Activated CD8-positive, alpha-beta T cell treated with anti-CD3 and anti-CD28 coated beads for 36 hours (primary cell): ENCODE measurements at regions of chr1 and their contacts with region 1.

Region 1: GRCh38 chr1:8970870-8971337 is 25.2 kb downstream of the CA6 start:
- DNase-seq: peak; percentile 85
- ATAC-seq: peak; percentile 83
- H3K4me3 Mint-ChIP-seq: peak overlapping the region; percentile 93
- H3K27ac Mint-ChIP-seq: peak overlapping the region; percentile 100
- H3K4me1 Mint-ChIP-seq: peaks cover 40% of the 10 kb centered on the region
- H3K27me3 Mint-ChIP-seq: no peaks in the 10 kb centered on the region
- CTCF ChIP-seq: no peak

Region 2: DNA sequence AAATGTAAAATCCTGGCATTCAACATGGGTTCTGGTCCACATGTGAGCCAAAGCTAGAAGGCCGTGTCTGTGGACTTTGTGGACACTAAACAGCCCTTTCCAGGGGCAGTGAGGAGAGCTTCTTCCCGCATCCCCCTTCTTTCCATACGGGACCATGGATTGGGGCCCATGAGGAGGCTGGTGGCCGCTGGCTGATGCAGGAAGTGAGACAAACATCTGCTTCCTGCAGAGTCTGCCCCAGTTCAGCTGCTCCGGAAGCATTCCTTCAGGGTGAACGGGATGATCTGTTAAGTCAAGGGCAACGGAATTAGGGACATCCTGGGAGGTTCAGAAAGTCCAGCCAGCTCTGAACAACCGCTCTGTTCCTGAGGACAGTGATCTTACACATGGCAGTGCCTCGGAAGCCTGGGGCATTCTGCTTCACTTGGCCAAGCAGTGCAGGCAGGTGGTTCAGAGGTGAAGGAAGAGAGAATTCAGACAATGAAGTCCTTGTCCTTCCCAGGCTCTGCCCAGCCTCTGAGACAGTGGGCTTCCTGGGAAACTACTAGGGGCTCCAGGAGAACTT is 23.7 kb before region 1 on chr1:
- CTCF ChIA-PET with region 1: interaction called, 74 read pairs
- POLR2A ChIA-PET with region 1: interaction called, 13 read pairs
- intact Hi-C with region 1: no loop called
- DNase-seq: no peak
- ATAC-seq: peak; percentile 9
- H3K4me3 Mint-ChIP-seq: peak overlapping the region; percentile 50
- H3K27ac Mint-ChIP-seq: peak overlapping the region; percentile 98
- H3K4me1 Mint-ChIP-seq: peaks cover 76% of the 10 kb centered on the region
- H3K27me3 Mint-ChIP-seq: no peaks in the 10 kb centered on the region
- CTCF ChIP-seq: no peak